Right cardiac atrium (tissue), 5 donors: ENCODE measurements at regions of chr12 and their contacts with region 1.

Region 1: GRCh38 chr12:104215638-104216297 is at the start of gene TXNRD1:
- DNase-seq: peak; percentile 87 to 95 (median 94)
- ATAC-seq: peak; percentile 93 to 94
- H3K4me3 ChIP-seq: peak within 1 kb of the TSS; percentile 73
- H3K27ac ChIP-seq: peak within 1 kb of the TSS; percentile 94
- H3K4me1 ChIP-seq: peaks cover 6% of the 10 kb centered on the region
- H3K27me3 ChIP-seq: no peaks in the 10 kb centered on the region
- total RNA-seq, gene TXNRD1: 118 to 187 (median 148) TPM

Region 2: DNA sequence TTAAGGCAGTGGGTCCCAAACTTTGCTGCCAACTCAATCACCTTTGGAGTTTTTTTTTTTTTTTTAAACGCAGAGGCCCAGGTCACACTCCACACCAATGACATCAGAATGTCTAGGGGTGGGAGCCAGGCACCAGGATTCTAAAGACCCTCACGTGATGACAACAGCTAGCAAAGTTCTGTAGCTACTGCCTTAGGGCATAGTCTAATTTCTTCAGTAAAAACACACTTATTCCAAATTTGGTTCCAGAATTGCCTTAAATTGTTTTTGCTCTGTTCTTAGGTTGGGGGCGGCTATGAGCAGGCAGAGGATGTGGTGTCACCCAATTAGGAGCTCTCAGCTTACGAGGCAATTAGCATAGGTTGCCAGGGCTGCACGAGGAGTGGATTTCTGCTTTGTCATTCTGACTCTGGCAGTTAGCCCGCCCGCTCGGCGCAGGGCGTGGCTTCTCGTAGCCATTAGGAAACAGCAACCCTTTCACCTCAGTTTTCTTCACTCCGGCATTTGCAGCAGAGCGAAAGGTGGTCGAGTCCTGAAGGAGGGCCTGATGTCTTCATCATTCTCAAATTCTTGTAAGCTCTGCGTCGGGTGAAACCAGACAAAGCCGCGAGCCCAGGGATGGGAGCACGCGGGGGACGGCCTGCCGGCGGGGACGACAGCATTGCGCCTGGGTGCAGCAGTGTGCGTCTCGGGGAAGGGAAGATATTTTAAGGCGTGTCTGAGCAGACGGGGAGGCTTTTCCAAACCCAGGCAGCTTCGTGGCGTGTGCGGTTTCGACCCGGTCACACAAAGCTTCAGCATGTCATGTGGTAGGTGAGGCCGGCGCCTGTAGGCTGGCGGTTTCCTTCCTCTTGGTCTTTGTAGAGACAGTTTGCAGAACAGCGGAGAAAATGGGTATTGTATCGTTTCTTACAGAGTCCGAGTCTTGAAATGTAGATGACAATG is 71.0 kb after region 1 on chr12:
- intact Hi-C with region 1: loop called (anchors 2 to 5 kb)
- DNase-seq: peak; percentile 94 to 98 (median 96)
- ATAC-seq: peak; percentile 95 to 96
- H3K4me3 ChIP-seq: peak overlapping the region; percentile 59
- H3K27ac ChIP-seq: peak overlapping the region; percentile 93
- H3K4me1 ChIP-seq: peaks cover 4% of the 10 kb centered on the region
- H3K27me3 ChIP-seq: no peaks in the 10 kb centered on the region

Region 3: GRCh38 chr12:104303538-104304151 is 87.9 kb after region 1 on chr12 and contains the start of gene EID3:
- intact Hi-C with region 1: loop called in 2 of 4 experiments (anchors 5 kb)
- DNase-seq: peak; percentile 93 to 97 (median 97)
- ATAC-seq: peak; percentile 99 to 100
- H3K4me3 ChIP-seq: peak within 1 kb of the TSS; percentile 29
- H3K27ac ChIP-seq: peak within 1 kb of the TSS; percentile 89
- H3K4me1 ChIP-seq: peaks cover 14% of the 10 kb centered on the region
- H3K27me3 ChIP-seq: no peaks in the 10 kb centered on the region
- total RNA-seq, gene EID3: 1.2 to 2.3 (median 1.8) TPM

Region 4: GRCh38 chr12:104358347-104359003 is 142.7 kb after region 1 on chr12:
- intact Hi-C with region 1: loop called in 1 of 4 experiments (anchors 5 kb)
- DNase-seq: peak; percentile 54 to 78 (median 58)
- ATAC-seq: peak; percentile 71 to 72
- H3K4me3 ChIP-seq: no peak overlapping the region
- H3K27ac ChIP-seq: no peak overlapping the region
- H3K4me1 ChIP-seq: no peaks in the 10 kb centered on the region
- H3K27me3 ChIP-seq: no peaks in the 10 kb centered on the region

Region 5: DNA sequence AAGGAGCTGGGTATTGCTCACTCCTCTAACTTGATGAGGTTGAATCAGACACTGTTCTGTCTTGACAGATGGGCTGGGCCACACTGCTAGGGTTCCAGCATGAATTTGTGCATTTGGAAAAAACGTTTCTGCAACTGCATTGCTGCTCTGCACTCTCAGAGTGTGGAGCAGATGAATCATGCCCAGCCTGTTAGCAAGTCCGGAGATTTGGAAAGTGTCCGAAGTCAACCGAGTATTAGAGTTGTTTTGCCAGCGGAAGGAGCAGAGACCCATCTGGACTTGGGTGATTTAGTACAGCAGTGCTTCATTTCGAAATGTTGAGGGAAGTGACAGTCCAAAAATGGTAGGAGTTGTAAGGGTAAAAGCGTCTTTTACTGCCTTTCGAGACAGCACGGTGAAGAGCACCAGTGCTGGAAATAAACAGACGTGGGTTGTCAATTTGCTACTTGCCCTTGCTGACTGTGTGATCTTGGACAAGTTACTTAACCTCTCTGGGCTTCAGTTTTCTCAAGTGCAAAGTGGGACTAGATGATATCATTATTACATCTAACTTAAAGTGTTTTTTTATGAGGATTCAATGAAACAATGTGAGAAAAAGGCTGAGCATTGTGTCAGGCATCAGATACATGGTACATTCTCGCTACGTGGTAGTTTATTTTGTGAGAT is 380.5 kb after region 1 on chr12:
- intact Hi-C with region 1: no loop called
- DNase-seq: peak; percentile 45 to 64 (median 54)
- ATAC-seq: peak; percentile 84 to 92
- H3K4me3 ChIP-seq: no peak overlapping the region
- H3K27ac ChIP-seq: no peak overlapping the region
- H3K4me1 ChIP-seq: peaks cover 2% of the 10 kb centered on the region
- H3K27me3 ChIP-seq: no peaks in the 10 kb centered on the region

Region 6: DNA sequence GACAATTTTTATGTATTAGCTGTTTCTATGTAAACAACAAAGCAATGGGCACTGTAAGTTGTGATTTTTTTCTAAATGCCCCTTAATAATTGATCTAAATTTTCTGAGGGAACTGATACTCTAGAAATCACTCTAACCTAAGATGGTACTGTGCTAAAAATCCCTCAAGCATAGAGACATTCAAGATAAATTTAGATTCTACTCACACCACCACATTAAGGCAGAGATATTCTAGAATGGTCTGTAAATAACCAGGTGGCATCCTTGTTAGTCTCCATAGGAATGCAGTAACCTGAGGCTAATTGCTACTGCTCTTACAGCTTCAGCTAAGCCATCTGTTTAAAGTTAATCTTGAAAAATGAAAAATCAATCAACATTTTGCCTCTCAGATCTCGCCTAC is 655.0 kb after region 1 on chr12:
- intact Hi-C with region 1: loop called in 1 of 4 experiments (anchors 5 kb)
- DNase-seq: no peak
- ATAC-seq: no peak
- H3K4me3 ChIP-seq: no peak overlapping the region
- H3K27ac ChIP-seq: no peak overlapping the region
- H3K4me1 ChIP-seq: no peaks in the 10 kb centered on the region
- H3K27me3 ChIP-seq: no peaks in the 10 kb centered on the region